Pancreas (tissue), 10 donors: ENCODE measurements at regions of chr21 and their contacts with region 1.

Region 1: DNA sequence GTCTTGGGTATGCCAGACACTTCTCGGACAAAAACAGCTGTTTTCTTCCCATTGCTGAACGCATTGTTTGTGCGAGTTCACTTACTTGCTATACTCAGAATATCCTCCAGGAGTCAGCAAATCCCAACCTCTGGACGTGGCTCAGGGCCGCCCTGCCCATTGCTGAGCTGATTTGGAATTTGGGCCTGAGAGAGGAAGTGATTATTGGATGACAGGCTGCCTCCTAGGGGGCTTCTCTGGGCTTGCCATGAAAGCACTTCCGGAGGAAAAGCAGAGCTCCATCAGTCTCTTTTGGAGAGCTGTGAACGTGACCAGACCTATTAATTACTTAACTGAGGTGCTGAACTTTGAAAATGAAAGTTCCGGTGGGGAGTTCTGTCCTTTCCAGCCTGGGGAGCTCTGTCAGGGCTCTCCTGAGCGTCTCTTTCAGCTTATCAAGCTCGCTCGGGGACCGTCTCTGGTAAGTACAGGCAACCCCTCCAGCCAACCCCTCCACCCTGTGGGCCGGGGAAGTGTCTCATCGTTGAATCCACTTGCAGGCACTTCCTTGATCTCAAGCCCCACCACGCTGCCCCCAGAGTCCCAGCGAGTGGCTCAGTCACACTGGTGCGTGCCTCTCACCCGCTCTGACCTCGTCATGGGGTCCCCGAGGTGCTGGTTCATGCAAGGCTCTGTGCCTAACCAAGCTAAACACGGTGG is 76.9 kb downstream of the CLIC6 start:
- DNase-seq: peak; percentile 62 to 76 (median 72)
- ATAC-seq: peak; percentile 92 to 96 (median 95)
- H3K4me3 ChIP-seq: peak overlapping the region in 1 of 4 donors; percentile 19
- H3K27ac ChIP-seq: peak overlapping the region in 3 of 4 donors; percentile 10 to 76 (median 70)
- H3K4me1 ChIP-seq: peaks cover 7 to 20% (median 11%) of the 10 kb centered on the region in 3 donors
- H3K27me3 ChIP-seq: no peaks in the 10 kb centered on the region
- CTCF ChIP-seq: peak; percentile 70 to 74 (median 71)

Region 2: DNA sequence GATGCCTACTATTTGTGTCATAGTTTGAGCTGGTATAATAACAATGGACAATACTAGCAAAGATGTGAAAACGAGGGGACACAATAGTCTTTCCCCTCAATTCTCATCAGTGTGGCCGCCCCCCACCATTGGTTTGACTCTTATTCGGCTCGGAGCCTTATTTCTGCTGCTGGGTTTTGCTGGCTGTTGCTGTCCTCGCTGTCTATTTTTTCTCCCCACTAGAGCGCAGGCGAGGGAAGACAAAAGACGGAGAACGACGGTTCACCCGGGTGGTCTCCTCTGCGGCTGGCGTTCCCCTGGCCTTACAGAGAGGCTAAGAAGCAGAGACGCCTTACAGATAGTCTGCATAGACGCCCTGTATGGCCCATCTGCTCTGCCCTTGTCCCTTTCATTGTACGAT is 57.6 kb before region 1 on chr21:
- intact Hi-C with region 1: no loop called
- DNase-seq: peak in 1 of 6 donors; percentile 51
- ATAC-seq: peak in 1 of 4 donors; percentile 71
- H3K4me3 ChIP-seq: no peak overlapping the region
- H3K27ac ChIP-seq: no peak overlapping the region
- H3K4me1 ChIP-seq: peaks cover 0 to 5% (median 0%) of the 10 kb centered on the region in 3 donors
- H3K27me3 ChIP-seq: no peaks in the 10 kb centered on the region
- CTCF ChIP-seq: peak in 1 of 4 donors; percentile 73

Region 3: GRCh38 chr21:34888569-34889319 is 143.0 kb after region 1 on chr21:
- intact Hi-C with region 1: loop called in 1 of 3 experiments (anchors 10 kb)
- DNase-seq: peak; percentile 90 to 96 (median 94)
- ATAC-seq: peak; percentile 74 to 86 (median 82)
- H3K4me3 ChIP-seq: peak overlapping the region; percentile 68 to 79 (median 72)
- H3K27ac ChIP-seq: peak overlapping the region; percentile 74 to 91 (median 86)
- H3K4me1 ChIP-seq: peaks cover 0 to 7% (median 7%) of the 10 kb centered on the region in 3 donors
- H3K27me3 ChIP-seq: peaks cover 0 to 40% (median 15%) of the 10 kb centered on the region in 4 donors
- CTCF ChIP-seq: no peak

Region 4: DNA sequence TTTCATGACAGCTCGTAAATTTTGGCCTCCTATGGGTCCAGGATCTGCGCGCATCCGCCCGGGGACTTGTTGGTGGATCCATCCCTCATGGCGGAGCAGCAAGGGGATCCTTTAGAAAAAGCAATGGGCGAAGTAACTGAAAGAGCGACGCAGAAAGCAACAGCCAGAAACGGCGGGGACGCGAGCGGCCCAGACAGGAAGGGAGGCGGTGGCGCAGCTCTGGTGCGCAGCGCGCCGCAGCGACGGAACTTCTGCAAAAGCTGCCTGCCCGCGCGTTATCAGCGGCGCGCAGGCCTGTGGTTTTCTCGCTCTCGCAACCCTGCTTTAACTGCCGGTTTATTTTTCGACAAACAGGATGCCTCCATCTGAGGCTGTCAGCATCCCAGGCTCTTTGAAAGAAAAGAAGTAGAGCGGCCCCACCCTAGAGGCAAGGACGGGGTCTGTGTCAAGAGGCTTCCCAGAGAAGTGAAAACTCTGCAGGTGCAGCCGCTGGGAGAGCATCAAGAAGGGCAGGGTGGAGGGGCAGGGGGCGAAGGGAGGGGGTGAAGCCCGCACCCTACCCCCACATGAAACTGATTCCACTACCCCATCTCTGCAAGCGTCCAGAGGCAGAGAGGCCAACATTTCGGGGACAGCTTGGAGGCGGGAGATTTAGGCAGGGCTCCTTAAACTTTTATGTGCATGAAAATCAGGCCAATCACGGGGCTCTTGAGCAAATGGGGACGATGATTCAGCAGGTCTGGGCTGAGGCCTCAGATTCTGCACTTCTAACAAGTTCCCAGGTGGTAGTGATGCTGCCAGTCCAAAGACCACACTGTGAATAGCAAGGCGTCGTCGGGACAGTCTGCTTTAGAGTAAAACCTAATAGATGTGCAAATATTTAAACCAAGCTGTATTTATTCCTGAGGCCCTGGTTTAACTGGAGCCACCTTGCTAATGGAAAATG is 281.2 kb after region 1 on chr21:
- intact Hi-C with region 1: no loop called
- DNase-seq: peak in 1 of 6 donors; percentile 37
- ATAC-seq: peak in 3 of 4 donors; percentile 61 to 84 (median 84)
- H3K4me3 ChIP-seq: no peak overlapping the region
- H3K27ac ChIP-seq: peak overlapping the region in 1 of 4 donors; percentile 44
- H3K4me1 ChIP-seq: no peaks in the 10 kb centered on the region
- H3K27me3 ChIP-seq: no peaks in the 10 kb centered on the region
- CTCF ChIP-seq: no peak

Region 5: GRCh38 chr21:35400233-35400957 is 654.7 kb after region 1 on chr21:
- intact Hi-C with region 1: loop called in 2 of 3 experiments (anchors 10 kb)
- DNase-seq: peak in 3 of 6 donors; percentile 12 to 42 (median 24)
- ATAC-seq: peak; percentile 85 to 99 (median 97)
- H3K4me3 ChIP-seq: no peak overlapping the region
- H3K27ac ChIP-seq: no peak overlapping the region
- H3K4me1 ChIP-seq: no peaks in the 10 kb centered on the region
- H3K27me3 ChIP-seq: no peaks in the 10 kb centered on the region
- CTCF ChIP-seq: peak in 3 of 4 donors; percentile 6 to 35 (median 34)